K562 (cell line): ENCODE measurements at regions of chr20 and their contacts with region 1.

Region 1: DNA sequence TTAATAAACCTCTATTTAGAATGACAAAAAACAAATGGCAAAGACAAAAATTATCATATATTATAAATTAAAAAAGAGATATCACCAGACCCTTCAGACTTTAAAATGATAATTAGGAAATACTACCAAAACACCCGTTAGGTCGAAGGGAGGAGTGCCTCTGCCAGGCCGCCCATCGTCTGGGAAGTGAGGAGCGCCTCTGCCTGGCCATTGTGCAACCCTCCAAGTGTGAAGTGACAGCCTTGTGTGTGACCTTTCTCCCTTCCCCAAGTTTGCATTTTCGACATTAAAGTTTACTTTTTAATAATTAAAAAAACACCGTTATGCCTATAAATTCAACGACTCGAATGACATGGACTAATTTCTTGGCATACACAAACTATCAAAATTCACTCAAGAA is 64.5 kb upstream of the TASP1 start:
- DNase-seq: peak in 1 of 4 experiments; percentile 11
- ATAC-seq: no peak
- H3K4me3 ChIP-seq: no peak overlapping the region
- H3K27ac ChIP-seq: no peak overlapping the region
- H3K4me1 ChIP-seq: no peaks in the 10 kb centered on the region
- H3K27me3 ChIP-seq: no peaks in the 10 kb centered on the region
- CTCF ChIP-seq: peak in 2 of 3 experiments; percentile 34 to 44; a peak in 3 of 6 replicates
- EP300 ChIP-seq: no peak
- POLR2A ChIP-seq: no peak
- RAD21 ChIP-seq: peak; percentile 24 to 55; a peak in 2 of 4 replicates

Region 2: GRCh38 chr20:13325033-13325432 is 378.2 kb before region 1 on chr20:
- CTCF ChIA-PET with region 1: no interaction called
- POLR2A ChIA-PET with region 1: no interaction called
- in situ Hi-C with region 1: no loop called
- intact Hi-C with region 1: loop called (anchors 10 kb)
- DNase-seq: peak; percentile 11 to 48 (median 24)
- ATAC-seq: peak; percentile 91
- H3K4me3 ChIP-seq: no peak overlapping the region
- H3K27ac ChIP-seq: no peak overlapping the region
- H3K4me1 ChIP-seq: no peaks in the 10 kb centered on the region; a peak in 1 of 5 replicates
- H3K27me3 ChIP-seq: no peaks in the 10 kb centered on the region
- CTCF ChIP-seq: peak; percentile 51 to 60 (median 54)
- EP300 ChIP-seq: no peak
- POLR2A ChIP-seq: no peak
- RAD21 ChIP-seq: peak; percentile 43 to 67; a peak in 3 of 4 replicates

Region 3: DNA sequence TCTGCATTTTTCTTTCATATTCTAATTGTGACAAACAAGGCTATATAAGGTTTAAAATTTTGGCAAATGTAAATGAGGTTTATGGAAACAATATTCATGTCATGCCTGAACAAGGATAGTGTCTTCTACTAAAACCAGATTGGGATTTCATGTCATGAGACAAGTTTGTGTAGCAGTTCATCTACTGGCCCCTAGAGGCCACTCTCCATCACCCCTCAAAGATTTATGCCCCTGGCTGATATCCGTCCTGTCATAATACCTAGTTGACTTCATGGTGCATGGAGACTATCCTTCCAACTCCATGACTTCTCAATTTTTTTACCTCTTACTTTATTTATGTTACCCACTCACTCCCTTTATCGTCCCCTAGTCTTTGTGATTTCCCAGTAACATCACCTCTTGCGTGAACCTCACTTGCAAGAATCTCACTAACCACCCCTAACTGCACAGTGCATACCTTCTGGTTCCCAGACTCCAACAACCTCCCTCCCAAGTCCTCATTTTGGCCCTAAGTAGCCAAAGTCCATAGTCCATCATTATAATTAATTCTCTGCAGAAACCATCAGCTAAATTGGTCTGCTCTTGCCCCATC is 244.3 kb before region 1 on chr20:
- CTCF ChIA-PET with region 1: no interaction called
- POLR2A ChIA-PET with region 1: no interaction called
- in situ Hi-C with region 1: no loop called
- intact Hi-C with region 1: loop called (anchors 2 kb)
- DNase-seq: peak; percentile 39 to 51 (median 45)
- ATAC-seq: peak; percentile 85
- H3K4me3 ChIP-seq: no peak overlapping the region
- H3K27ac ChIP-seq: no peak overlapping the region
- H3K4me1 ChIP-seq: no peaks in the 10 kb centered on the region
- H3K27me3 ChIP-seq: no peaks in the 10 kb centered on the region
- CTCF ChIP-seq: peak; percentile 58 to 73 (median 66)
- EP300 ChIP-seq: no peak
- POLR2A ChIP-seq: no peak
- RAD21 ChIP-seq: peak in 1 of 2 experiments; percentile 44; a peak in 3 of 4 replicates

Region 4: DNA sequence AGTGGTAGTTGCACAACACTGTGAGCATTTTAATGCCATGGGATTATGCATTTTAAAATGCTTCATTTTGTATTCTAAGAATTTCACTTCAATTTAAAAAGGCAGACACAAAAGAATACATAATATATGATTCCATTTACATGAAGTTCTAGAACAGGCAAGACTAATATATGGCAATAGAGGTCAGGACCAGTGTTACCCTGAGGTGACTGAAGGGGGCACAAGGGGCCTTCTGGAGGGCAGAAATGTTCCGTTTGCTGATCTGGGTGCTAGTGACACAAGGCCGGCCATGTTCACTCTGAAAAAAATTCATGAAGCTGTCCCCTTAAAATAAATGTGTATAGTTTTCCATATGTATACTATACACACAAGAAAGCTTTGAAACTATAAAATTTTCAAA is 93.1 kb before region 1 on chr20:
- CTCF ChIA-PET with region 1: no interaction called
- POLR2A ChIA-PET with region 1: no interaction called
- in situ Hi-C with region 1: no loop called
- intact Hi-C with region 1: loop called (anchors 10 kb)
- DNase-seq: peak; percentile 8 to 16 (median 10)
- ATAC-seq: peak; percentile 77
- H3K4me3 ChIP-seq: no peak overlapping the region
- H3K27ac ChIP-seq: no peak overlapping the region
- H3K4me1 ChIP-seq: no peaks in the 10 kb centered on the region
- H3K27me3 ChIP-seq: no peaks in the 10 kb centered on the region
- CTCF ChIP-seq: peak; percentile 28 to 48 (median 37); a peak in 3 of 6 replicates
- EP300 ChIP-seq: no peak
- POLR2A ChIP-seq: no peak
- RAD21 ChIP-seq: peak in 1 of 2 experiments; percentile 20; a peak in 2 of 4 replicates